ENCODE measurements at regions of chr5 and their contacts with region 1.

Region 1: GRCh38 chr5:131906668-131907067 is 38.8 kb downstream of the MEIKIN start:
- DNase-seq: no peak
- H3K4me3 Mint-ChIP-seq: no peak overlapping the region
- H3K27ac Mint-ChIP-seq: peak overlapping the region; percentile 51
- H3K4me1 Mint-ChIP-seq: peaks cover 26% of the 10 kb centered on the region
- H3K27me3 Mint-ChIP-seq: no peaks in the 10 kb centered on the region

Region 2: GRCh38 chr5:131854134-131854533 is 52.5 kb before region 1 on chr5:
- CTCF ChIA-PET with region 1: no interaction called
- intact Hi-C with region 1: loop called (anchors 1 kb)
- DNase-seq: peak; percentile 37
- H3K4me3 Mint-ChIP-seq: no peak overlapping the region
- H3K27ac Mint-ChIP-seq: no peak overlapping the region
- H3K4me1 Mint-ChIP-seq: peaks cover 10% of the 10 kb centered on the region
- H3K27me3 Mint-ChIP-seq: no peaks in the 10 kb centered on the region

Region 3: GRCh38 chr5:132771503-132771998 is 864.9 kb after region 1 on chr5:
- CTCF ChIA-PET with region 1: no interaction called
- intact Hi-C with region 1: no loop called
- DNase-seq: no peak
- H3K4me3 Mint-ChIP-seq: no peak overlapping the region
- H3K27ac Mint-ChIP-seq: no peak overlapping the region
- H3K4me1 Mint-ChIP-seq: peaks cover 3% of the 10 kb centered on the region
- H3K27me3 Mint-ChIP-seq: peaks cover 2% of the 10 kb centered on the region